B cell (primary cell): ENCODE measurements at regions of chr5 and their contacts with region 1.

Region 1: DNA sequence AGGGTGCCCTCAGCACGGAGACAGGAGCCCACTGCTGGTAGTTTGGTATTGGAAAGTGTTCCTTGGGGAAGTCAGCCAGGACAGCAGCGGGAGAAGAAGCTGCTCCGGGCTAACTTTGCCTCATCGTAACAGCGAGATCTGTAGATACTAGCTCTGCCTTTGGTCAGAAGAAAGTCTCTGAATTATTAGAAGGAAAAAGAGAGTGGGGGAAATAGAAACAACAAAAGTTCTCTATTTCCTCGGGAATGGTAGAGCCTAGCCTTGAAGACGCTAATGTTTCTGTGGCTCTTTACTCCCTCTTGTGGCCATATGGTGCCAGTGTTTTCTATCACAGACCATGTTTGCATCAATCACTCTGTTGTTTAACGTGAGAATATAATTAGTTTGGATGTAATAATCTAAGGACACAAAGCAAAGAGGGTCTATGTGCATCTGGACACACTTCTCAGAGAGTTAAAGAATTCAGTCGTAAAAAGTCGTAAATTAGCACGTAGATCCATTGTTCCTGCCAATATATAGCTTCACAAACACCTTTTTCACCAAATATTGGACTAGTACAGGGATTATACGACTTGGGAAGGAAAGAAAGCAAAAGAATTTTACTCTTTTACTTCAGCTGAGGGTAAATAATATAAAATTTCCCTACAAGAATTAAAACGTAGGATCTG is 40.2 kb upstream of the HSD17B4 start:
- DNase-seq: peak; percentile 85
- ATAC-seq: peak; percentile 74
- H3K4me3 ChIP-seq: peak overlapping the region; percentile 50 to 79 (median 70)
- H3K4me3 Mint-ChIP-seq: peak overlapping the region; percentile 91
- H3K27ac ChIP-seq: peak overlapping the region; percentile 55 to 67
- H3K27ac Mint-ChIP-seq: peak overlapping the region; percentile 88
- H3K4me1 ChIP-seq: peaks cover 62 to 65% of the 10 kb centered on the region in 2 donors
- H3K4me1 Mint-ChIP-seq: peaks cover 75% of the 10 kb centered on the region
- H3K27me3 ChIP-seq: no peaks in the 10 kb centered on the region
- H3K27me3 Mint-ChIP-seq: no peaks in the 10 kb centered on the region
- CTCF ChIP-seq: peak; percentile 94

Region 2: DNA sequence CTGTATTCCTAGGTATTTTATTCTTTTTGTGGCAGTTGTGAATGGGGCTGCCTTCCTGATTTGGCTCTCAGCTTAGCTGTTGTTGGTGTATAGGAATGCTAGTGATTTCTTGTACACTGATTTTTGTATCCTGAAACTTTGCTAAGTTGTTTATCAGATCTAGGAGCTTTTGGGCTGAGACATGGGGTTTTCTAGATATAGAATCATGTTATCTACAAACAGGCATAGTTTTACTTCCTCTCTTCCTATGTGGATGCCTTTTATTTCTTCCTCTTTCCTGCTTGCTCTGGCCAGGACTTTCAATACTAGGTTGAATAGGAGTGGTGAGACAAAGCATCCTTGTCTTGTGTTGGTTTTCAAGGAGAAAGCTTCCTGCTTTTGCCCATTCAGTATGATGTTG is 211.3 kb before region 1 on chr5:
- CTCF ChIA-PET with region 1: interaction called, 27 read pairs
- POLR2A ChIA-PET with region 1: no interaction called
- intact Hi-C with region 1: no loop called
- DNase-seq: peak; percentile 12
- ATAC-seq: no peak
- H3K4me3 ChIP-seq: no peak overlapping the region
- H3K4me3 Mint-ChIP-seq: peak overlapping the region; percentile 42
- H3K27ac ChIP-seq: peak overlapping the region in 1 of 2 donors; percentile 13
- H3K27ac Mint-ChIP-seq: peak overlapping the region; percentile 86
- H3K4me1 ChIP-seq: peaks cover 12 to 16% of the 10 kb centered on the region in 2 donors
- H3K4me1 Mint-ChIP-seq: peaks cover 28% of the 10 kb centered on the region
- H3K27me3 ChIP-seq: no peaks in the 10 kb centered on the region
- H3K27me3 Mint-ChIP-seq: no peaks in the 10 kb centered on the region
- CTCF ChIP-seq: no peak

Region 3: DNA sequence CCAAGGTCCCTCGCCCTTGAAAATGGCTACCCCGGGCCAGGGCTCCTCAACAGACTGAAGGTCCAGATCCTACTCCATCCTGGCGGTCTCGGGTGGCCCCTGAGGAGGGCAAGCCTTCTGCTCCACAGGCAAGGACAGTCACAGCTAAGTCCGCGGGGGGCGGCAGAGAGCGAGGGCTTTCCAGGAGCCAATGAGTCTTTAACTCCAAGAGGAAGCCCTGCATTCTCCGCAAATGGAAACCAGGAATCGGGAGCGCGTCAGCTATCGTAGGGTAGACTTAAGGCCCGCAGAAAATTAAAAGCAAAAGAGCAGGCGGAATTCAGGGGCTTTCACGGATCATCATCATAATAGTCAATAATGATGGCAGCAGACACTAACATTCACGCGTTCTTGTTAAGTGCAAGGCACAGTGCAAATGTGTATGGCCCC is 144.1 kb before region 1 on chr5:
- CTCF ChIA-PET with region 1: interaction called, 79 read pairs
- POLR2A ChIA-PET with region 1: interaction called, 5 read pairs
- intact Hi-C with region 1: loop called (anchors 1 kb)
- DNase-seq: peak; percentile 94
- ATAC-seq: peak; percentile 63
- H3K4me3 ChIP-seq: peak overlapping the region; percentile 79 to 99 (median 96)
- H3K4me3 Mint-ChIP-seq: peak overlapping the region; percentile 98
- H3K27ac ChIP-seq: peak overlapping the region; percentile 83 to 91
- H3K27ac Mint-ChIP-seq: peak overlapping the region; percentile 95
- H3K4me1 ChIP-seq: peaks cover 39 to 40% of the 10 kb centered on the region in 2 donors
- H3K4me1 Mint-ChIP-seq: peaks cover 51% of the 10 kb centered on the region
- H3K27me3 ChIP-seq: no peaks in the 10 kb centered on the region
- H3K27me3 Mint-ChIP-seq: no peaks in the 10 kb centered on the region
- CTCF ChIP-seq: peak; percentile 38

Region 4: DNA sequence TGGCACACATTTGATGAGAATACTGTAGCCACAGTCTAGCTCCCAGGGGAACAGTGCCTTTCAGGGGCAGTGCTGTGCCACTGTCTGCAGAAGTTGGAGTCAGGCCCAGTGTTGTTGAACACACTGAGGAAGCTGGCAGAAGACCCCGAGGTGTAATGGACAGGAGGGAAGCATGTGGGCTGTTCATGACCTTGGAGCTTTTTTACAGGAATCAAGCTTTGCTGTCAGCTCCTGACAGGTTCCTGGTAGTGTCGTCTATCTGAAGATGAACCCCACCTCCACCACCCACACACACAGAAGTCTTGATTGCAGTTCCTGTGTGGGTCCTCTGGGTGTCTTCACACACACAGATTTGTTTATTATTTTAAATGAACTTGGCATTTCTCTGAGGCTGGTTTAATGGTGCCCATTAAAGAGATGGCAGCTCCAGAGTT is 96.5 kb before region 1 on chr5:
- CTCF ChIA-PET with region 1: interaction called, 195 read pairs
- POLR2A ChIA-PET with region 1: interaction called, 4 read pairs
- intact Hi-C with region 1: loop called (anchors 1 kb)
- DNase-seq: peak; percentile 82
- ATAC-seq: peak; percentile 81
- H3K4me3 ChIP-seq: peak overlapping the region in 1 of 5 experiments; percentile 39
- H3K4me3 Mint-ChIP-seq: peak overlapping the region; percentile 66
- H3K27ac ChIP-seq: peak overlapping the region; percentile 57 to 65
- H3K27ac Mint-ChIP-seq: peak overlapping the region; percentile 90
- H3K4me1 ChIP-seq: peaks cover 95% of the 10 kb centered on the region in 2 donors
- H3K4me1 Mint-ChIP-seq: peaks cover 89% of the 10 kb centered on the region
- H3K27me3 ChIP-seq: no peaks in the 10 kb centered on the region
- H3K27me3 Mint-ChIP-seq: no peaks in the 10 kb centered on the region
- CTCF ChIP-seq: peak; percentile 68

Region 5: GRCh38 chr5:119347991-119348390 is 64.1 kb before region 1 on chr5:
- CTCF ChIA-PET with region 1: interaction called, 18 read pairs
- POLR2A ChIA-PET with region 1: no interaction called
- intact Hi-C with region 1: no loop called
- DNase-seq: no peak
- ATAC-seq: no peak
- H3K4me3 ChIP-seq: no peak overlapping the region
- H3K4me3 Mint-ChIP-seq: peak overlapping the region; percentile 18
- H3K27ac ChIP-seq: peak overlapping the region in 1 of 2 donors; percentile 54
- H3K27ac Mint-ChIP-seq: peak overlapping the region; percentile 80
- H3K4me1 ChIP-seq: peaks cover 92 to 95% of the 10 kb centered on the region in 2 donors
- H3K4me1 Mint-ChIP-seq: peaks cover 92% of the 10 kb centered on the region
- H3K27me3 ChIP-seq: no peaks in the 10 kb centered on the region
- H3K27me3 Mint-ChIP-seq: no peaks in the 10 kb centered on the region
- CTCF ChIP-seq: no peak

Region 6: DNA sequence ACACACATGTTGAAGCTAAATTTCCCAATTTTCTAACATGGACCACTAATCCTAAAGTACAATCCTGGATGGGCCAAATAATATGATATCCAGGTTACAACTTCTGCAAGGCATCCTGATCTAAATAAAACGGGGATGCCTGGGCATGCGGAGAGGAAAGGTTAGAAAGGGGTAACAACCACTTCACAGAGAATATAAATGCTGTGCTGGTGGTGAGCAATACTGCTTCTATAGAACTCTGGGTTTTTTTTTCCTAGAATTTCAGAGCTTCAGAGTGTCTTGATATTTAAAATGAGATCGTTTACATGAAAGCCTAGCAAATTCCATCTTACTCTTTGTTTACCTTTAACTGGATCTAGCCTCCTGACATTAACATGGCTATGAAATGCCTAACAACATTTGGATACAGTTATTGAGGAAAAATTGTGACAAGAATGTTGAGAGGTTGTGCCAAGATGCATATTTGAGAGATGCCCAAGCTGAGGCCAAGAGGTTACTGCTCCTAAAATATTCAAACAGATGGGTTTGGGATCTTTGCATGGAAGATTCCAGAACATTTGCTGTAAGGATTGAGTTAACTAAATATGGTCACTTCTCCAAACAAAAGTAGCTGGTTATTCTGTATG is 33.9 kb before region 1 on chr5:
- CTCF ChIA-PET with region 1: interaction called, 14 read pairs
- POLR2A ChIA-PET with region 1: no interaction called
- intact Hi-C with region 1: no loop called
- DNase-seq: no peak
- ATAC-seq: no peak
- H3K4me3 ChIP-seq: no peak overlapping the region
- H3K4me3 Mint-ChIP-seq: no peak overlapping the region
- H3K27ac ChIP-seq: peak overlapping the region in 1 of 2 donors; percentile 47
- H3K27ac Mint-ChIP-seq: peak overlapping the region; percentile 68
- H3K4me1 ChIP-seq: peaks cover 51% of the 10 kb centered on the region in 2 donors
- H3K4me1 Mint-ChIP-seq: peaks cover 74% of the 10 kb centered on the region
- H3K27me3 ChIP-seq: no peaks in the 10 kb centered on the region
- H3K27me3 Mint-ChIP-seq: no peaks in the 10 kb centered on the region
- CTCF ChIP-seq: no peak

Region 7: DNA sequence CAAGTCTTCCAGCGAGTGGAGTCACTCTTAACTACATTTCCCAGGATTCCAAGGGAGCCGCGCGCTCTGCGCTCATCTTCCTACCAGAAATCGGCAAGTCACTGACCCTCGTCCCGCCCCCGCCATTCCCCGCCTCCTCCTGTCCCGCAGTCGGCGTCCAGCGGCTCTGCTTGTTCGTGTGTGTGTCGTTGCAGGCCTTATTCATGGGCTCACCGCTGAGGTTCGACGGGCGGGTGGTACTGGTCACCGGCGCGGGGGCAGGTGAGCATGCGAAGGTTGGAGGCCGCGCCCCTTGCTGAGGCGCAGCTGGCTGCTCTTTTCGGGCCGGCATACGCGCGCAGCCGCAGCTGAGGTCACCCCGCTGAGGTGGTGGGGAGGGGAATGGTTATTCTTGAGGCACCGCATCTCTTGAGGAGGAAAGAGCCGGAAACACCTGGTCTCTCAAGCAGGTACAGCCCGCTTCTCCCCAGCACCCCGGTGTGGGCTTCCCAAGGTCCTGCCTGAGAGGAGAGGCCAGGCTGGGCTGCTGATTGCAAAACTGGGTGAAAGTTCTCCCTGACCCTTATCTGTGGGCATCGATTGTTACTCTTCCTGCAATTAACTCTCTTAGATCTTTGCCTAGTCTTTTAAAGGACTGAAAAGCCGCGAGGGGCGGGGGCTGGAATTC is 40.4 kb after region 1 on chr5 and contains the start of gene HSD17B4:
- CTCF ChIA-PET with region 1: interaction called, 4 read pairs
- POLR2A ChIA-PET with region 1: interaction called, 4 read pairs
- intact Hi-C with region 1: loop called (anchors 5 kb)
- DNase-seq: peak; percentile 92
- ATAC-seq: peak; percentile 93
- H3K4me3 ChIP-seq: peak within 1 kb of the TSS; percentile 69 to 89 (median 77)
- H3K4me3 Mint-ChIP-seq: peak within 1 kb of the TSS; percentile 96
- H3K27ac ChIP-seq: peak within 1 kb of the TSS; percentile 86 to 87
- H3K27ac Mint-ChIP-seq: peak within 1 kb of the TSS; percentile 97
- H3K4me1 ChIP-seq: peaks cover 32% of the 10 kb centered on the region in 2 donors
- H3K4me1 Mint-ChIP-seq: peaks cover 53% of the 10 kb centered on the region
- H3K27me3 ChIP-seq: no peaks in the 10 kb centered on the region
- H3K27me3 Mint-ChIP-seq: no peaks in the 10 kb centered on the region
- CTCF ChIP-seq: no peak
- total RNA-seq, gene HSD17B4: 112 and 114 TPM in 2 replicates

Region 8: GRCh38 chr5:119483155-119483554 is 71.1 kb after region 1 on chr5:
- CTCF ChIA-PET with region 1: no interaction called
- POLR2A ChIA-PET with region 1: no interaction called
- intact Hi-C with region 1: no loop called
- DNase-seq: no peak
- ATAC-seq: no peak
- H3K4me3 ChIP-seq: no peak overlapping the region
- H3K4me3 Mint-ChIP-seq: no peak overlapping the region
- H3K27ac ChIP-seq: no peak overlapping the region
- H3K27ac Mint-ChIP-seq: no peak overlapping the region
- H3K4me1 ChIP-seq: no peaks in the 10 kb centered on the region
- H3K4me1 Mint-ChIP-seq: peaks cover 1% of the 10 kb centered on the region
- H3K27me3 ChIP-seq: no peaks in the 10 kb centered on the region
- H3K27me3 Mint-ChIP-seq: no peaks in the 10 kb centered on the region
- CTCF ChIP-seq: no peak